AG04449 (cell line): ENCODE measurements at regions of chr14 and their contacts with region 1.

Region 1: DNA sequence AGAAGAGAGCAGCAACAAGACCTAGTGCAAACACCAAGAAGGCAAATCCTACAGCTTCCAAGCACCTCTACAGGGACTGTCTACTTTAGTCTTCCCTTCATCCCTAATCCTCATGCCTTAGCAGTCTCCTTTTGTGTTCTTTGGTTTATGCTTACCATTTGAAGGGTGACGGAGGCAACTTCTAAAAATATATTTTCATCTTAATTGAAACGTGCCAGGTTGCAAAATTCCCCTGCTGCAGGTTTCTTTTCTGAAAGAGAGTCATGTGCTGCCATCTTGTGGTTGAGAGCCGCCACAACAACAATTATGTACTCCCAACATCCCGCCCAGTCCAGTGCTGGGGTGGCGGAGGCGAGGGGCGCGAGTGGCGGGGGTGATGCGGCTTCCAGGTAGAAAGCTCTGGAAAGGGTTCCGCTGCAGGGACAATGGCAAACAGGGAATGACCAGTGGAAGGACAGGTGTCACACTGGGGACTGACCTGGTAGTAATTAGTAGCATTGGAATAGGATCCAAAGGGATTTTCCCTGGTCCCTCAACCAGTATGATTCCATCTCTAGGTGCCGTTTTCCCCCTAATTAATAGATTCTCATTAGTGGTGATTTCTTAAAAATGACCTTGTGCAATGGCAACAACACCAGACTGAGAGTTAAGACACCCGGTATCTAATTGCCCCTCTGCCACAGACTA is 80.3 kb upstream of the GNG2 start:
- DNase-seq: no peak
- H3K4me3 ChIP-seq: no peak overlapping the region; the same call in 1 of the 2 replicates
- CTCF ChIP-seq: peak; percentile 61

Region 2: GRCh38 chr14:51242545-51243490 is 537.3 kb before region 1 on chr14:
- CTCF ChIA-PET with region 1: interaction called, 11 read pairs
- POLR2A ChIA-PET with region 1: no interaction called
- DNase-seq: no peak
- H3K4me3 ChIP-seq: no peak overlapping the region
- CTCF ChIP-seq: no peak

Region 3: DNA sequence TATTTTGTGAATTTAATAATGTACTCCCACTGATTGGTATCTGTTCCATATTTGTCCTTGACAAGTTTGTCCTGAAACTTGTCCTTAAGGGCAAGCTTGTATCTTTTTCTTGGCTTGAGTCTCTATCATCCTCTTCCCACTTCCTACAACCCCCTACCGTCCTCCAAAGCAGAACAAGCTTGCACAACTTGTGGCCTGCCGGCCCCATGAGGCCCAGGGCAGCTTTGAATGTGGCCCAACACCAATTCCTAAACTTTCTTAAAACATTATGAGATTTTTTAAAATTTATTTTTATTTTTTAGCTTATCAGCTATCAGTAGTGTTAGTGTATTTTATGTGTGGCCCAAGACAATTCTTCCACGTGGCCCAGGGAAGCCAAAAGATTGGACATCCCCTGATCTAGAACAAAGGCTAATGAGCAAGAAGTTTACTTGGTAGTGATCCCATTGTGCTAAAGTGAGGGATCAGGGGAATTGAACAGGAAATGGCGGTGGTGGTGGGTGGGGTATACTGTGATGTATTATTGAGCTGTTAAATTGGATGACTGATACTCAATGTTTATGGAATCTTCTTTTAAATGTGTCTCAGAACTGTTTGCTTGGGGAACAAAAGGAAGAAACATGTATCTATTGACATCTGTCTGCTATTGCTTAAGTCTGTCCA is 502.3 kb before region 1 on chr14:
- CTCF ChIA-PET with region 1: interaction called, 429 read pairs
- POLR2A ChIA-PET with region 1: no interaction called
- DNase-seq: no peak
- H3K4me3 ChIP-seq: no peak overlapping the region
- CTCF ChIP-seq: no peak

Region 4: DNA sequence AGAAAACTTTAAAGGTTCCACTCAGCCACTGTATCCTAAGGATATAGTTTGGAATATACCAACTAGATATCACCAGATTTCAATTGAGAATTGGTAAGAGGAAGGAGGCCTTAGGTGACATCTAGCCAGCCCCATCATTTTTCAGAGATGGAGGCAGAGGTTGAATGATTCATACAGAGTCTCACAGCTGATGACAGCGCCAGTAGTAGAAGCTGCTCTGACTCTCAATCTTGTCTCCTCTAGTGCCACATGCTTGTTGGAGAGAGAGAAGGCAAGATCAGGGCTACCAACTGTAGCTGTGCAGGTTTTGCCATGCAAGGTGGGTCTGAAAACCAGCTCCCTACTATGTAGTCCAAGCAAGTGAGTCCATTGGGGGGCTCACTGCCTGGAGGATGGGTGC is 122.4 kb before region 1 on chr14:
- CTCF ChIA-PET with region 1: interaction called, 24 read pairs
- POLR2A ChIA-PET with region 1: no interaction called
- DNase-seq: no peak
- H3K4me3 ChIP-seq: peak overlapping the region; percentile 47
- CTCF ChIP-seq: no peak

Region 5: DNA sequence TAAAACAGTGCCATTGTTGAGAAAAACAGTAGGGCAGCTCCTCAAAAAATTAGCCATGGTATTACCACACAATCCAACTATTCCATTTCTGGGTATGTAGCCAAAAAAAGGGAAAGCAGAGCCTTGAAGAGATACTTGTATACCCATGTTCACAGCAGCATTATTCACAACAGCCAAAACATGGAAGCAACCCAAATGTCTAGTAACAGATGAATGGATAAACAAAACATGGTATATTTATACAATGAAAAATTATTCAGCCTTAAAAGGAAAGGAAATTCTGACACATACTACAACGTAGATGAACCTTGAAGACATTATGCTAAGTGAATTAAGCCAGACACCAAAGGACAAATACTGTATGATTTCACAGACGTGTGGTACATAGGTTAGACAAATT is 12.7 kb after region 1 on chr14:
- CTCF ChIA-PET with region 1: interaction called, 20 read pairs
- POLR2A ChIA-PET with region 1: no interaction called
- DNase-seq: no peak
- H3K4me3 ChIP-seq: no peak overlapping the region
- CTCF ChIP-seq: no peak